Activated B cell treated with CpG ODN at 0.5 μM for 24 hours (primary cell): ENCODE measurements at regions of chr13 and their contacts with region 1.

Region 1: DNA sequence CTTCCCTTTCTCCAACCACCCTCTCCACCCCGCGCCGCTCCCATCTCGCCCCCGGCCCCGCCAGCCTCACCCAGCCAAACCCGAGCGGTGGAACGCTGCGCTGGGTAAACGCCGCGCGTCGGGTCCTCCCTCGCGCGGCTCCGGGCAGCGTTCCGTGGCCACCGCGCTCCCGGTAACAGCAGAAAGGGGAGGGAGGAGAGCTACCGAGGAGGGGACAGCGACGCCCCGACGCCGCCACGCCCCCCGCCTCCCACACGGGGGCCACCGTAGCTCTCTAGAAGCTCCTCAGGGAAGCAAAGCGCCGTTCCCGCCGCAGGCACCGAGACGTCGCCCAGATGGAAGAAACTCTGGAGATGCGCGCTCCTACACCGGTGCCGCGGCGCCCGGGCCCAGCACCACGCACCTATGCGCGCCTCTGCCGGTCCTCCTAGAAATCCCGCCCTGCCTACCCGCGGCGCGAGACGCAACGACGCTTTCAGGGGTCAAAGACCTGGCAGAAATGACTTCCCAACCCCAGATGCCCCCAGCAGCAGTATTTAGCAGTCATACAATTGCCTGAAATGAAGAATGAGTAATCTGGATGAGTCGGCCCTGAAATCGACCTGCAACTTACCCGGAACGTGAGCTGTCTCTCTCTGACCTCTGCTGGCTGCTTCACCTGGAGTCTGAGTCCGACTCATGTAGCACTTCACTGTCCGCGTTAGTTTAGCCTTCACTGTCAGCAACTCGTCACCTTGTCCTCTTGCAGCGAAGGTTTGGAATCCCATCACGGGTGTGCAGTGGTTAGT is at the start of gene RUBCNL:
- DNase-seq: peak; percentile 69
- ATAC-seq: peak; percentile 46
- H3K4me3 Mint-ChIP-seq: peak within 1 kb of the TSS; percentile 95
- H3K27ac Mint-ChIP-seq: peak within 1 kb of the TSS; percentile 93
- H3K4me1 Mint-ChIP-seq: peaks cover 68% of the 10 kb centered on the region
- H3K27me3 Mint-ChIP-seq: no peaks in the 10 kb centered on the region
- CTCF ChIP-seq: no peak
- total RNA-seq, gene RUBCNL: 133 and 168 TPM in 2 replicates

Region 2: DNA sequence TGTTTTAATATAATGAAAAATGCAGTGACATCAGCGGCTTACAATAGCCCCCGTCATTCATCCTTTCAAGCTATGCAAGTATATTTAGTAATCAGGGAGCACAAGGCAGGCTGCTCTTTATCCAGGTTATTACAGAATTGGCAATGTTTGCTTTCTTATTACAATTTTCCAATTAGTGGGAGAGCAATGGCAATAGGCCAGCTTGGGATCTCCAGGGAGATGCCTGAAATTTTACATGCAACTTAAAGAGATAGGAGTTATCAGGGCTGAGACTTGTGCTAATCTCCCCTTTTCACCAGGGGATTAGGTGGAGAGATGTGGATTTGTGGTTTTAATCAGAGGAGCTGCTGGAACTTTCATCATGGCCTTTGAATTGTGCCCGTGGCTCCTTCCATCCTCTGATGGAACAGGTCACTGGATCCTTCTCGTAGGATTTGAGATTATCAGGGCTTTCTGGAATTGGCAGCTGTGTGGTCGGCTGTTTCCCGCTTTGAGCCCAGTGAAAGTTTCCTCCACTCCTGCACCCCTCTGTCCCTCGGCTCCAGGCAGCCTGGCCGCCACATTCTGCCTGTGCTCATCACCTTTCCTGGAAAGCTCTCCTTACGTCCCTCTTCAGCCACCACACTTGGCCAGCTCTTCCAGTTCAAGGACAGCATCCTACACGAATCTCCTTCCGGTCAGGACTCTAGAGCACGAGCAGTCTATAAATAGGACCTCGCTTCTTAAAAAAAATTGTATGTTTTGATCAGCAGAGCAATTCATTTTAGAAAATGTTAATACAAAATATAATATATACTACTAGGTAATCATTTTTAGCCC is 638.1 kb before region 1 on chr13:
- CTCF ChIA-PET with region 1: no interaction called
- POLR2A ChIA-PET with region 1: no interaction called
- intact Hi-C with region 1: no loop called
- DNase-seq: no peak
- ATAC-seq: no peak
- H3K4me3 Mint-ChIP-seq: no peak overlapping the region
- H3K27ac Mint-ChIP-seq: no peak overlapping the region
- H3K4me1 Mint-ChIP-seq: no peaks in the 10 kb centered on the region
- H3K27me3 Mint-ChIP-seq: peaks cover 5% of the 10 kb centered on the region
- CTCF ChIP-seq: no peak

Region 3: DNA sequence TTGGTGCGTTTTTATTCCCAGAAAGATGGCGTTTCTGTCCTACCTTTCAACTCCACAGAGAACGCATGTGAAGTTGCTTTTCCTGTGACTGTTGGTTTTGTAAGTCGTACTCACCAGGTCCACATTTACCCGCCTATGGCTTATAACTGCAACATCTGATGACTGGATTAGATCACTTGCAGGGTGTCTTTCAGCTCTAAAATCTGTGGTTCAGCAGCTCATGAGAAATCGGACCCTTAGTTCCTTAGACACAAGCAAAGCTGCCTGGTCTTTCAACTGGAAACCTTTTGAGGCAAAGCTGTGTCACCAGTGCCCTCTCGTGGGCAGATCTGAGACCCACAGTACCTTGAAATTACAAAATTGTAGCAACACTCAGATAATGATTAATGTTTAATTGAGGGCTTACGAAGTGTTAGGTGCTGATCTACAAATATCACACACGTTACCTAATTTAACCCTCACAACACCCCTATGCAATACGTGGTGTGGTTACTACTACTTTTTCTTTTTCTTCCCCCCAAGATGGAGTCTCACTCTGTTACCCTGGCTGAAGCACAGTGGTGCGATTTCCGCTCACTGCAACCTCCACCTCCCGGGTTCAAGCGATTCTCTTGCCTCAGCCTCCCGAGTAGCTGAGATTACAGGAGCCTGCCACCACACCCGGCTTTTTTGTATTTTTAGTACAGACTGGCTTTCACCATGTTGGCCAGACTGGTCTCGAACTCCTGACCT is 65.6 kb before region 1 on chr13:
- CTCF ChIA-PET with region 1: interaction called, 4 read pairs
- POLR2A ChIA-PET with region 1: interaction called, 10 read pairs
- intact Hi-C with region 1: no loop called
- DNase-seq: no peak
- ATAC-seq: peak; percentile 81
- H3K4me3 Mint-ChIP-seq: no peak overlapping the region
- H3K27ac Mint-ChIP-seq: no peak overlapping the region
- H3K4me1 Mint-ChIP-seq: peaks cover 15% of the 10 kb centered on the region
- H3K27me3 Mint-ChIP-seq: no peaks in the 10 kb centered on the region
- CTCF ChIP-seq: peak; percentile 75

Region 4: GRCh38 chr13:46354156-46355091 is 32.8 kb before region 1 on chr13:
- CTCF ChIA-PET with region 1: no interaction called
- POLR2A ChIA-PET with region 1: interaction called, 23 read pairs
- intact Hi-C with region 1: no loop called
- DNase-seq: no peak
- ATAC-seq: peak; percentile 79
- H3K4me3 Mint-ChIP-seq: no peak overlapping the region
- H3K27ac Mint-ChIP-seq: peak overlapping the region; percentile 83
- H3K4me1 Mint-ChIP-seq: peaks cover 12% of the 10 kb centered on the region
- H3K27me3 Mint-ChIP-seq: no peaks in the 10 kb centered on the region
- CTCF ChIP-seq: no peak

Region 5: GRCh38 chr13:46374710-46375109 is 12.5 kb before region 1 on chr13:
- CTCF ChIA-PET with region 1: interaction called, 70 read pairs
- POLR2A ChIA-PET with region 1: interaction called, 95 read pairs
- intact Hi-C with region 1: loop called (anchors 1 kb)
- DNase-seq: no peak
- ATAC-seq: peak; percentile 61
- H3K4me3 Mint-ChIP-seq: peak overlapping the region; percentile 83
- H3K27ac Mint-ChIP-seq: peak overlapping the region; percentile 95
- H3K4me1 Mint-ChIP-seq: peaks cover 97% of the 10 kb centered on the region
- H3K27me3 Mint-ChIP-seq: no peaks in the 10 kb centered on the region
- CTCF ChIP-seq: no peak

Region 6: DNA sequence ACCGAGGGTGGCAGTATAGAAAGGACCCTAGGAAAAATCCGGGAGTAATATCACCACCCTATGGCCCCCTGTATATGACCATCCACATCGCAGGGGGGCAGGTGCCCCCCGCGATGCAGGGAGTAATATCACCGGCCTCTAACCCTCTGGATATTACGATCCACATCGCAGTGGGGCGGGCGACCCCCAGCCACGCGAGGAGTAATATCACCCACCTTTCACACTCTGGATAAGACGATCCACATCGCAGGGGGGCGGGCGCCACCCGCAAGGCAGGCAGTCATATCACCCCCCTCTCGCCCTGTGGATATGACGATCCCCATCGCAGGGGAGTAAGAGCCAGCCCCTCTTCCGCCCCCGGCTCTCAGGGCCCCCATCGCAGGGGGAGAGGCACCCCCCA is 76.5 kb after region 1 on chr13:
- CTCF ChIA-PET with region 1: no interaction called
- POLR2A ChIA-PET with region 1: no interaction called
- intact Hi-C with region 1: loop called (anchors 5 kb)
- DNase-seq: no peak
- ATAC-seq: no peak
- H3K4me3 Mint-ChIP-seq: no peak overlapping the region
- H3K27ac Mint-ChIP-seq: no peak overlapping the region
- H3K4me1 Mint-ChIP-seq: no peaks in the 10 kb centered on the region
- H3K27me3 Mint-ChIP-seq: no peaks in the 10 kb centered on the region
- CTCF ChIP-seq: no peak

Region 7: DNA sequence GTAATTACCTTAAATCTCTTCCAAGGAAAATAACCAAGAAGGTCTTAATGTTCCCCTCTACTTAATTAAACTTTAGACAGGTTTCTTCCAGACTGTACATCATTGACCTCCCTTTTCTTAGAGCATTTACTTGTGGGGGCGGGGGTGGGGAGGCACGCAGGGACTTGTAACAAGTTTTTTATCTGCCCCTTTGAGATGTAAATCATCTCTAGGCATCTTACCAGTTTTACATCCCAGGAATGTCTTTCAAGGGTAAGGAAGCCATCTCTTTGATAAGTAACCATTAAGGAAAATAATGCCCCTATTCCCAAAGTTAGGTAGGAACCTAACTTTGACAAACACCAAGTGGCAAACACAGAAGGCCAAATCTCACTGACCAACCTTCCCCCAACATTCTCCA is 1085.3 kb after region 1 on chr13:
- CTCF ChIA-PET with region 1: no interaction called
- POLR2A ChIA-PET with region 1: no interaction called
- intact Hi-C with region 1: no loop called
- DNase-seq: no peak
- ATAC-seq: no peak
- H3K4me3 Mint-ChIP-seq: no peak overlapping the region
- H3K27ac Mint-ChIP-seq: no peak overlapping the region
- H3K4me1 Mint-ChIP-seq: no peaks in the 10 kb centered on the region
- H3K27me3 Mint-ChIP-seq: no peaks in the 10 kb centered on the region
- CTCF ChIP-seq: no peak